HEK293 (cell line): ENCODE measurements at regions of chr10 and their contacts with region 1.

Region 1: GRCh38 chr10:103062604-103063590 is 130.2 kb downstream of the NT5C2 start:
- H3K4me3 ChIP-seq: no peak overlapping the region
- H3K27ac ChIP-seq: no peak overlapping the region
- H3K4me1 ChIP-seq: no peaks in the 10 kb centered on the region
- CTCF ChIP-seq: peak; percentile 48; the same call in 1 of the 2 replicates

Region 2: GRCh38 chr10:103307594-103307993 is 244.7 kb after region 1 on chr10:
- CTCF ChIA-PET with region 1: interaction called, 10 read pairs
- POLR2A ChIA-PET with region 1: no interaction called
- H3K4me3 ChIP-seq: no peak overlapping the region
- H3K27ac ChIP-seq: no peak overlapping the region
- H3K4me1 ChIP-seq: no peaks in the 10 kb centered on the region
- CTCF ChIP-seq: no peak

Region 3: GRCh38 chr10:103564776-103565520 is 502.1 kb after region 1 on chr10:
- CTCF ChIA-PET with region 1: no interaction called
- POLR2A ChIA-PET with region 1: no interaction called
- H3K4me3 ChIP-seq: no peak overlapping the region
- H3K27ac ChIP-seq: no peak overlapping the region
- H3K4me1 ChIP-seq: no peaks in the 10 kb centered on the region
- CTCF ChIP-seq: peak; percentile 80